ENCODE measurements at regions of chr3 and their contacts with region 1.

Region 1: GRCh38 chr3:56801662-56802377 is at the start of gene ARHGEF3:
- DNase-seq: peak; percentile 96
- H3K4me3 ChIP-seq: peak within 1 kb of the TSS; percentile 73 to 75
- H3K27ac ChIP-seq: peak within 1 kb of the TSS in 1 of 2 experiments; percentile 25; a peak in 1 of 4 replicates
- H3K4me1 ChIP-seq: peaks cover 8 to 28% of the 10 kb centered on the region in 2 experiments; a peak in 2 of 4 replicates
- H3K27me3 ChIP-seq: no peaks in the 10 kb centered on the region
- CTCF ChIP-seq: peak; percentile 62
- EP300 ChIP-seq: no peak
- RAD21 ChIP-seq: peak; percentile 30; the same call in 1 of the 2 replicates
- polyA plus RNA-seq, gene ARHGEF3: 5.7 and 5.9 TPM in 2 replicates

Region 2: DNA sequence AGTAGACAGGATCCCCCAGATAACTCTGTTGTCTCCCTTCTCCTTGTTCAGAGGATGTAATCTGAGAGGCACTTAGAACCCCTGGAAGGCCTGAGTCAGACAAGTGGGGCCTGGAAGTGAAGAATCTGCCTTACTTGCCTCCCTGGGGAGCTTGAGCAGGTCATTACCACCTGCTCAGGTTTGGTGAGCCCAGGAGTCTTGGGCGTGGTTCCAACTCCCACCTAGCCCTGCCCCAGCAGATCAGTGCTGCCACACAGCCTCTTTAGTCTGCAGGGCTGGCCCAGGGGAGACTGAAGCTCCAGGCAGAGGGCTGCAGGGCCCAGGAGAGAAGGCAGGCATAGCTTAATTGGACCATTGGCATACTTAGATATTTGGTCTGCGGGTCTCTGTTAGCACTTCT is 563.5 kb before region 1 on chr3:
- CTCF ChIA-PET with region 1: no interaction called
- POLR2A ChIA-PET with region 1: no interaction called
- DNase-seq: no peak
- H3K4me3 ChIP-seq: no peak overlapping the region
- H3K27ac ChIP-seq: no peak overlapping the region
- H3K4me1 ChIP-seq: no peaks in the 10 kb centered on the region
- H3K27me3 ChIP-seq: no peaks in the 10 kb centered on the region
- CTCF ChIP-seq: no peak
- EP300 ChIP-seq: no peak
- RAD21 ChIP-seq: no peak

Region 3: DNA sequence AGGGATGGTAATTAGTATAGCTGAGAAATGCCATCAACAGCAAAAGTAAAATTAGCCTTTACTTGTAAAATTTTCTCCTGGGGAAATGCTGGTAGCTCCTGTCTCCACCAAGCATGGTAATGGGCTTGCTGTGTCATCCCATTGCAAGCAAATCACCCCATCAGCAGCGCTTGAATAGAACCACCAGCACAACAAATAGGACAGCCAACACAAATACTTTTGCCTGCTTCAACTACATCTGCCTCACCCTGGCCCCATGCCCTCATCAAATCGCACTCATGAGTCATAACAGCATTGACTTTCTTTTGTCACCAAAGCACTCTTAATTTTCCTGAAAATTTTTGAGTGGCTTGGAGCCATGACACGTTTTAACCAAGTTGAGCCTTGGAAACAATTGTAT is 386.2 kb before region 1 on chr3:
- CTCF ChIA-PET with region 1: no interaction called
- POLR2A ChIA-PET with region 1: no interaction called
- DNase-seq: no peak
- H3K4me3 ChIP-seq: no peak overlapping the region
- H3K27ac ChIP-seq: no peak overlapping the region
- H3K4me1 ChIP-seq: no peaks in the 10 kb centered on the region
- H3K27me3 ChIP-seq: no peaks in the 10 kb centered on the region
- CTCF ChIP-seq: no peak
- EP300 ChIP-seq: no peak
- RAD21 ChIP-seq: no peak

Region 4: DNA sequence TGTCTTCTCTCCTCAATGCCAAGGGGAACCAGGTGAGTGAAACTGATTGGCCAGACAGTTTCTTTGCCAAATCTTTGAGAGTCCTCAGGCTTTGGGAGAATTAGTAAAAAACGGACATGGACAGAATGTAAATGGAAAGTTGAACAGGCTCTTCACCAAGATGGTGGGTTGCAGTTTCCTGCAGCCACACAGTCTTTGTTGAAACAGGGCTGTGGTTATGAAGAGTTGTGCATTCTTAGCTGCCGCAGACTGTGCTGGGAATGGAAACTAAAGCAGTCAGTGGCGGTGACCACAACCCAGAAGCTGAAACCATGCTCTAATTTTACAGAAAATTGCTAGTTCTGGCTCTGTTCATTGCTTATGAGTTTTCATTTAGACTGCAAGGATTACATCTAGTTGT is 76.6 kb before region 1 on chr3:
- CTCF ChIA-PET with region 1: interaction called, 10 read pairs
- POLR2A ChIA-PET with region 1: no interaction called
- DNase-seq: no peak
- H3K4me3 ChIP-seq: no peak overlapping the region
- H3K27ac ChIP-seq: no peak overlapping the region
- H3K4me1 ChIP-seq: no peaks in the 10 kb centered on the region
- H3K27me3 ChIP-seq: no peaks in the 10 kb centered on the region
- CTCF ChIP-seq: no peak
- EP300 ChIP-seq: no peak
- RAD21 ChIP-seq: no peak

Region 5: DNA sequence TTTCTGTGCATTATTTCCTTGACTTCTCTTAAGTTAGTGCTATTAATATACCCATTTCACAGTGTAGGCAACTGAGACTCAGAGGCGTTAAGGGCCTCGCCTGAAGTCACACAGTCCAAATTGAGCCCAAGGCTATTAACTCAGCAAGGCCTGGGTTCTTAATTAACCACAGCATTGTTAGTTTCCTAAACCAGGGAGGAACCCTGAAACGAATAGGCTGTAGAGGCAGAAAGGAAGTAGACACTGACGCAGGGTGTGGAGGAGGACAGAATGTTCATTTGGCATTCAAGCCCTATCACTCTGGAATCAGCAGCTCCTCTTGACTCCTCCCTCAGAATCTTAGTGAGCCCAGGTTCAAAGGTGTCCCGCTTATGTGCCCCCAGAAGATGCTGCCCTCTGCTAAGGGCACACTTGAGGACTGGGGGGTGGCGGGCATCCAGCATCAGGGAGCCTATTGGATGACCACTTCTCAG is 14.0 kb before region 1 on chr3:
- CTCF ChIA-PET with region 1: interaction called, 34 read pairs
- POLR2A ChIA-PET with region 1: no interaction called
- DNase-seq: no peak
- H3K4me3 ChIP-seq: no peak overlapping the region
- H3K27ac ChIP-seq: no peak overlapping the region
- H3K4me1 ChIP-seq: peaks cover 7 to 30% of the 10 kb centered on the region in 2 experiments
- H3K27me3 ChIP-seq: no peaks in the 10 kb centered on the region
- CTCF ChIP-seq: no peak
- EP300 ChIP-seq: no peak
- RAD21 ChIP-seq: no peak

Region 6: GRCh38 chr3:56980798-56981390 is 179.1 kb after region 1 on chr3:
- CTCF ChIA-PET with region 1: interaction called, 195 read pairs
- POLR2A ChIA-PET with region 1: interaction called, 3 read pairs
- DNase-seq: no peak
- H3K4me3 ChIP-seq: no peak overlapping the region
- H3K27ac ChIP-seq: peak overlapping the region; percentile 28 to 65
- H3K4me1 ChIP-seq: peaks cover 6 to 38% of the 10 kb centered on the region in 2 experiments; a peak in 2 of 4 replicates
- H3K27me3 ChIP-seq: no peaks in the 10 kb centered on the region
- CTCF ChIP-seq: no peak
- EP300 ChIP-seq: peak in 1 of 2 experiments; percentile 66; a peak in 1 of 4 replicates
- RAD21 ChIP-seq: no peak

Measured in SK-N-SH (cell line).